ENCODE measurements at regions of chr2 and their contacts with region 1.

Region 1: GRCh38 chr2:50591642-50592041 is 440.3 kb downstream of the NRXN1 start:
- DNase-seq: no peak
- H3K4me3 Mint-ChIP-seq: no peak overlapping the region
- H3K27ac Mint-ChIP-seq: no peak overlapping the region
- H3K4me1 Mint-ChIP-seq: no peaks in the 10 kb centered on the region
- H3K27me3 Mint-ChIP-seq: no peaks in the 10 kb centered on the region
- CTCF ChIP-seq: no peak

Region 2: DNA sequence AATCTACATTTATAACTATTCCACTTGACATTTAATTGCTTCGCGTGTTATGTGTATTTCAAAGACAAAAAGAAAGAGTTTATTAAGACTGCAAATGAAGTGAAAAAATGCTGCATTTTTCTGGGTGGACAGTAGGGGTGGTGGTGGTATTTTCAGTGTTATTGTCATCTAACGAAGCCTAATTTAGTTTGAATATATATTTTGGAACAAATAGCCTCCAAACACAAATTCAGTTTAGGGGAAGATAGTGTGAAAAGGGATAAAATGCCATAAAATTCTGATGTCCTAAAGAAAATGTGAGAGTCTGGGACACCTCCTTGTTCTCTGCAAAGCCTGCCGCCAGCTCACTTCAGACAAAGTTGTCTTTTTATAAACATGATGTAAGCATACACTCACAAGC is 15.2 kb after region 1 on chr2:
- CTCF ChIA-PET with region 1: interaction called, 10 read pairs
- POLR2A ChIA-PET with region 1: no interaction called
- intact Hi-C with region 1: no loop called
- DNase-seq: no peak
- H3K4me3 Mint-ChIP-seq: no peak overlapping the region
- H3K27ac Mint-ChIP-seq: no peak overlapping the region
- H3K4me1 Mint-ChIP-seq: peaks cover 6% of the 10 kb centered on the region
- H3K27me3 Mint-ChIP-seq: no peaks in the 10 kb centered on the region
- CTCF ChIP-seq: peak; percentile 14

Region 3: DNA sequence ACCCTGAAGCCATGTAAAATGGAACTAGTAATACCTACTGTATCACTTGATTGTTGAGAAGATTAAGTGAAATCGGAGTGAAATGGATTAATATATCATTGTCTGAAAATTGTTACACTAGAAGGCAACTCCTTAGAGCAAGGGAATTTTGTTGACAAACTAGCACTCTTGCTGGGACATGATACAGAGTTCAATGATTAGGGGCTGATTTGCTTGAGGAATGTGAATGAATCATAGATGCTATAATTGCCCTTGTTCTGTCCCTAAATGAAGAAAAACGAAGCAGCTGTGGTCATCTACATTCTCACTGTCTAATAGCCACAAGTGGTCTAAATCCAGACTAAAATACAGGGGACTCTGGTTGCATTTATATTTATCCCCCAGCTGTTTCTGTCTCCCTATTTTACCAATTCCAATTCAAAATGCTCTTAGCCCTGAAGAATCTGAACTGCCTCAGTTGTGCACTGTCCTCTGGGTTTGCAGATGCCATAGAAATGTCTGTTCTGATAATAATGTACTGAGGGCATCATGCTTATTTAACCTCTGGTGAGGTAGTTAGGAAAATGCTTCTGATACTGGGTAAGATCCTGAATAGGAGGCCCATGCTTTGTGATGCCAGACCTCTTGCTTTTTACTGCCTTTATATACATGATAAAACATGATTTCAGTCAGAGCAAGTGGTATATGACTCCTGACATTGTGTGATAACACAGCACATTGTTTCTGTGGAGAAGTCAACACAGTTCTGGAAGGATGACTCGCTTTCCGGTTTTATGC is 58.2 kb after region 1 on chr2:
- CTCF ChIA-PET with region 1: no interaction called
- POLR2A ChIA-PET with region 1: no interaction called
- intact Hi-C with region 1: no loop called
- DNase-seq: peak; percentile 34
- H3K4me3 Mint-ChIP-seq: peak overlapping the region; percentile 37
- H3K27ac Mint-ChIP-seq: peak overlapping the region; percentile 90
- H3K4me1 Mint-ChIP-seq: peaks cover 32% of the 10 kb centered on the region
- H3K27me3 Mint-ChIP-seq: no peaks in the 10 kb centered on the region
- CTCF ChIP-seq: no peak